ENCODE measurements at regions of chr7 and their contacts with region 1.

Region 1: DNA sequence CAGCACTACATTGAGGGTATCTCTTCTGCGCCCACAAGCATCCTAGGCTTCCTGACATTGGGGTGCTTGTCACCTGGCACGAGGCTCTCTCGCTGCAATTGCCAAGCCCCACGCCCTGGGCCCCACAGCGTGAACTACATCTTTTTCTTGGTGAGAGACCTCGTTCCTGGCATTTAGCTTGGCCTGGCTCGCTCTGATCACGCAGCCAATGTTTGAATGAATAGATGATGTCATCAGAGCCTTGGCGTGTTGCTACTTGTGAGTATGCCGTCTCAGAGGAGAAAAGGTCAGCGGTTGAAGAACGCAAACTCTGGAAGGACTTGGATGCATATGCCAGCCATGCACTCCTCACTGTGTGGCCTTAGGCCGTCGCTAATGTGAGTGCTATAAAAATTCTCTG is 150.2 kb upstream of the AUTS2 start:
- DNase-seq: no peak
- H3K4me3 ChIP-seq: no peak overlapping the region
- H3K27ac ChIP-seq: no peak overlapping the region
- H3K4me1 ChIP-seq: peaks cover 5% of the 10 kb centered on the region
- CTCF ChIP-seq: no peak

Region 2: DNA sequence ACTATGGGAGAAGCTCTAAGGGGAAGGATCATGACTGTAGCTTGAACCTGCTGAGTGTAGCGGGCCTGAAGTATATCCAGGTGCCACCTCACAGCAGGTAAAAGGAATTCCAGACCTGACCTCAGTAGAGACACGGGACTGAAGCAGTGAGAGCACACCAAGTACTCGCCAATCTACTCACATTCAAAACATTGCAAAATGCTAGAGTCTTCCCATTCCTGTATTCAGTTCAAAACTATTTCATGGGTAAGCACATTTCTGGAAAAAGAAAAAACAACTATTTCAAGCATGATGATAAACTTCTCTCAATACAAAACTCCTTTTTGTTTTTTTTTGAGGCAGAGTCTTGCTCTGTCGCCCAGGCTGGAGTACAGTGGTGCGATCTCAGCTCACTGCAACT is 28.3 kb after region 1 on chr7:
- CTCF ChIA-PET with region 1: no interaction called
- POLR2A ChIA-PET with region 1: no interaction called
- intact Hi-C with region 1: loop called (anchors 1 kb)
- DNase-seq: no peak
- H3K4me3 ChIP-seq: no peak overlapping the region
- H3K27ac ChIP-seq: no peak overlapping the region
- H3K4me1 ChIP-seq: no peaks in the 10 kb centered on the region
- CTCF ChIP-seq: no peak

Region 3: DNA sequence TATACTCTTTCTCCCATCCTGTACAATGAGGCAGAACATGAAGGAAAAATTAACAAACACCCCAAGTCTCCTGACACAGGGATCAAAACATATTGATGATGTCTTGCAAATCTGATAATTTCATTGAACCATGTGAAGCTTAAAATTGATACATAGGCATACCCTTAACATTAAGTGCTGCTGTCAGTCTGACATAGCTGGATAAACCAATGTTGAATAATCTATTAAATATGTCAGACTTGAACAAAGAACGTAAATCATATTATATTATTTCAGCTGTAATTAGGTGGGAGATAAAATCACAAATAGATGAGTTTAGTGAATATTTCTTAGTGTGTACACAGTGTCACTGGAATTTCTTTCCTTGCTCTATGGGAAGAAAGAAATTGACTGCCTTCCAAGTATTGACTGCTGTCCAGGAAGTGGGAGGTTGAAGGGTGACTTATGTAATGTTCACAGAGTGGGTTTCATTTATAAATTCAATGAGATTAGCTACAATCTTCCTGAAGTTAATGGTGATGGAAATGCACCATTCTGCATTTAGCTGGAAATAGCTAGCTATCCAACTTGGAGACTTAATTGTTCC is 321.0 kb after region 1 on chr7:
- CTCF ChIA-PET with region 1: no interaction called
- POLR2A ChIA-PET with region 1: no interaction called
- intact Hi-C with region 1: no loop called
- DNase-seq: no peak
- H3K4me3 ChIP-seq: no peak overlapping the region
- H3K27ac ChIP-seq: peak overlapping the region; percentile 73
- H3K4me1 ChIP-seq: peaks cover 55% of the 10 kb centered on the region
- CTCF ChIP-seq: no peak

Measured in OCI-LY7 (cell line).